Activated naive CD4-positive, alpha-beta T cell treated with anti-CD3 and anti-CD28 coated beads for 36 hours (primary cell): ENCODE measurements at regions of chr1 and their contacts with region 1.

Region 1: DNA sequence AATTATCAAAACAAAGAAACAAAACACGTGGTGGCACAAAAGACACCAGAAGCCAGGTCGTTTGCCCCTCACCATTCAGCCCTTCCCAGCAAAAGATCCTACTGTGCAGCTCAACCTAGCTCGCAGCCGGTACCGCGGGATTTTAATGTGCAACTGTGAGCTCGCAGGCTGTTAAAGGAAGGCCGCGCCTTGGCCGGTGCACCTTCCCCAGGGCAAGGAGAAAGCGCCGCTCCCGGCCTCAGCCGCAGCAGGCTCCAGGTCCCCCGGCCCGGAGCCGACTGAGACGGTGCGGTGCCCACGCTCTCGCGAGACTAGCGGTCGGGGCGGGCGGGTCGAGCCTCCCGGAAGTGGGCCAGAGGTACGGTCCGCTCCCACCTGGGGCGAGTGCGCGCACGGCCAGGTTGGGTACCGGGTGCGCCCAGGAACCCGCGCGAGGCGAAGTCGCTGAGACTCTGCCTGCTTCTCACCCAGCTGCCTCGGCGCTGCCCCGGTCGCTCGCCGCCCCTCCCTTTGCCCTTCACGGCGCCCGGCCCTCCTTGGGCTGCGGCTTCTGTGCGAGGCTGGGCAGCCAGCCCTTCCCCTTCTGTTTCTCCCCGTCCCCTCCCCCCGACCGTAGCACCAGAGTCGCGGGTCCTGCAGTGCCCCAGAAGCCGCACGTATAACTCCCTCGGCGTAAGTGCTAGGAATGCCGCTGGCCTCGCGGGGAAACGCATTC is at the start of gene AGL:
- DNase-seq: peak; percentile 89
- H3K4me3 Mint-ChIP-seq: peak within 1 kb of the TSS; percentile 98
- H3K27ac Mint-ChIP-seq: peak within 1 kb of the TSS; percentile 91
- H3K4me1 Mint-ChIP-seq: peaks cover 23% of the 10 kb centered on the region
- H3K27me3 Mint-ChIP-seq: no peaks in the 10 kb centered on the region
- total RNA-seq, gene AGL: 15.6 to 16.8 TPM

Region 2: DNA sequence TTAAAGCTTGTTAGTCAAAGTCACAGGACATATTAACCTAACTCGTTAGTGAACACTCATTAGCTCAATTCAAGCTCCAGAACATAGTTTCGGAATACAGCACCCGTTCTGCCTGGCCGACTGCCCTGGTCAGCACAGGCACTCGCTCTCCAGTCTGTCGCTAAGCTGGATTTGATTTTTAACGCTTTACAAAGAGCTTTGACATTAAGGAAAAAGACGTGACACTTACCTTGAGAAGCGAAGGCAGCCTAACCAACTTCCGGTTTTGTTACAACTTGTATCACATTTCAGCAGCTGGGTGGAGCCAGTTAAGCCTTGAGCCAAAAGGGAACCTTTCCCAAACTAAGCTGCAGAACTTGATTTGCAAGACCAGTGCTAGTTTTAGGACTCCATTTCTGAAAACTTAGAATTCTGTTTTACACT is 83.5 kb before region 1 on chr1 and contains the start of gene FRRS1:
- CTCF ChIA-PET with region 1: no interaction called
- intact Hi-C with region 1: loop called (anchors 1 kb)
- DNase-seq: peak; percentile 65
- H3K4me3 Mint-ChIP-seq: peak within 1 kb of the TSS; percentile 85
- H3K27ac Mint-ChIP-seq: no peak within 1 kb of the TSS
- H3K4me1 Mint-ChIP-seq: peaks cover 4% of the 10 kb centered on the region
- H3K27me3 Mint-ChIP-seq: peaks cover 5% of the 10 kb centered on the region
- total RNA-seq, gene FRRS1: 0.32 to 0.52 TPM

Region 3: GRCh38 chr1:99820546-99820945 is 29.4 kb before region 1 on chr1:
- CTCF ChIA-PET with region 1: no interaction called
- intact Hi-C with region 1: loop called (anchors 1 kb)
- DNase-seq: peak; percentile 54
- H3K4me3 Mint-ChIP-seq: no peak overlapping the region
- H3K27ac Mint-ChIP-seq: no peak overlapping the region
- H3K4me1 Mint-ChIP-seq: peaks cover 11% of the 10 kb centered on the region
- H3K27me3 Mint-ChIP-seq: no peaks in the 10 kb centered on the region

Region 4: DNA sequence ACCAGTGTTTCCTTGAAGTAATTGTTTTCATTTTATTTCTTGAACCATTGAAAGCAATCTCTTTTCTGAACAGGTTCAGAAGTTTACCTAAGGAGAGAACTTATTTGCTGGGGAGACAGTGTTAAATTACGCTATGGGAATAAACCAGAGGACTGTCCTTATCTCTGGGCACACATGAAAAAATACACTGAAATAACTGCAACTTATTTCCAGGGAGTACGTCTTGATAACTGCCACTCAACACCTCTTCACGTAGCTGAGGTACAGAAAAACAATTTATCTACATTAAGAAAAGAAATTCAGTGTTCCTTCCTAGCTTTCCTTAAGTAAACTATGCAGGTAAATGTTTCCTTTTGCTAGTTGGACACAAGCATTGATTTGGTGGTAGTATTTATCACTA is 27.7 kb after region 1 on chr1:
- CTCF ChIA-PET with region 1: no interaction called
- intact Hi-C with region 1: no loop called
- DNase-seq: no peak
- H3K4me3 Mint-ChIP-seq: no peak overlapping the region
- H3K27ac Mint-ChIP-seq: no peak overlapping the region
- H3K4me1 Mint-ChIP-seq: no peaks in the 10 kb centered on the region
- H3K27me3 Mint-ChIP-seq: no peaks in the 10 kb centered on the region

Region 5: GRCh38 chr1:99969729-99970621 is 120.1 kb after region 1 on chr1 and contains the start of gene SLC35A3:
- CTCF ChIA-PET with region 1: no interaction called
- intact Hi-C with region 1: loop called (anchors 1 kb)
- DNase-seq: peak; percentile 85
- H3K4me3 Mint-ChIP-seq: peak within 1 kb of the TSS; percentile 96
- H3K27ac Mint-ChIP-seq: peak within 1 kb of the TSS; percentile 85
- H3K4me1 Mint-ChIP-seq: peaks cover 22% of the 10 kb centered on the region
- H3K27me3 Mint-ChIP-seq: no peaks in the 10 kb centered on the region
- total RNA-seq, gene SLC35A3: 13.8 to 15.5 TPM

Region 6: DNA sequence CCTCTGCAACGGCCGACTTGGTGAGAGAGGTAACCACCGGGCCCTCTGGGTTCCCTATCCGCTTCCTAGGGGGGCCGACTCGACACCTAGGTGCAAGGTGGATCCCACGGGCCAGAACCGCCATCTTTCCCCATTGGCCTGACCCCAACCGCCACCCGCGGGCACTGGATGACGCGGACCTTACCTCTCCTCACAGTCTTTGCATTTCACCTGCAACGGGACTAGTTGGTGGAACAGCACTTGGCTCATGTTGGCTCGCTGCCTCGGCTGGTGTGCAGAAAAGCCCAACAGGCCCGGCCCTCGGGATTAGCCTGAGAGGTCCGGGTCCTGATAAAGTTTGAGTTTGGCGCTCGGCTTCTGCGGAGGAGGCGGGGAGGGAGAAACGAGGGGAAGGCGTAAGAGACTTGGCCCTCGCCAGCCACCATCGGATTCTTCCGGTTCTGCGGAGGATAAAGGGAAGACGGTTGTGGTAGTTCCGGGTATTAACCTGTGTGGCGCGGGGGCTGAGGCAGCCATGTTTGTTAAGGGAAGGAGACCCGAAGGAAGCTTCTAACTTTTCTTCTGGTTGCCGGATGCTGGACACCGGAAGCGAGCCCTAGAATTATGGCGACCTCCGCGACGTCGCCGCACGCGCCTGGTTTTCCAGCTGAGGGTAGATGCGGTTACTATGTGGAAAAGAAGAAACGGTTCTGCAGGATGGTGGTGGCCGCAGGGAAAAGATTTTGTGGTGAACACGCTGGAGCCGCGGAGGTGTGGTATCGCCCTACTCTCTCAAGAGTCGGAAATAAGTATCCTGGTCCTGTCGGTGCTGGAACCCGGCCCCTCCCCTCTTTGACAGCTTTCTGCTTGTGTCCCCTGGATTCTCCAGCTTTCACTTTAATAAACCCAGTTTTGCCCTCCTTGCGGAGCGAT is 282.9 kb after region 1 on chr1 and contains the starts of genes SASS6 and TRMT13:
- CTCF ChIA-PET with region 1: no interaction called
- intact Hi-C with region 1: loop called (anchors 1 kb)
- DNase-seq: peak; percentile 97
- H3K4me3 Mint-ChIP-seq: peak within 1 kb of the TSS; percentile 91
- H3K27ac Mint-ChIP-seq: peak within 1 kb of the TSS; percentile 87
- H3K4me1 Mint-ChIP-seq: peaks cover 37% of the 10 kb centered on the region
- H3K27me3 Mint-ChIP-seq: no peaks in the 10 kb centered on the region
- total RNA-seq, gene SASS6: 8.2 TPM
- total RNA-seq, gene TRMT13: 12.9 to 16.6 TPM

Region 7: DNA sequence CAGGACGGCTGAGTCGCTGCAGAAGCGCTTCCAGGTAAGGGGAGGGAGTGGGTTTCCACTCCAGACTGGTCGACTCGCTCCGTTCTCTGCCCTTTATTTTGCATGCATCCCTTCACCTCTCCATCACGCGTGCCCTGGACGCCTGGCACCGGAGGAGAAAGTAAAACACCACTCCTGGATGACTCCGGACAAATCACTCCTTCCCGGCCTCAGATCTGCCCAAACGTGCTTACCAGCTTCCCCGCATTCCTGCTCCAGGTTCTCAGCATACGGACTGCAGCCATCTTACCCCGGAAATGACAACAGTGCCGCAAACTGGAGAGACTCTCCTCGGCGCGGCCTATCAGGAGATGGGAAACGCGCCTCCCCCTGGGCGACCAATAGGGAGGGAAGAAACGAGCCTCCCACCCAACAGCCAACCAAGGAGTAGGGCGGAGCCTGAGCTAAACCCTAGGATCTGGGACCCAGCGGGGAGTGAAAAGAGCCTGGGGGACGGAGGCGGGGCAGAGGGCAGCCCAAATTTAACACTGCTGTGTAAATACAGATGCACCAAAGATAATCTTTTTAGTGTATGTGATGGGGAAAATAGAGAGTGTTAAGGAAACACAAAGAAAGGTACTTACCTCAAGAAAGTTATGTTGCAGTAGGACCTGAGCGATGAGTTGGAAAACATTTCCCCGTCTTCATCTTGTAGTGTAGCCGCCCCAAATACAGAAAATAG is 399.8 kb after region 1 on chr1 and contains the start of gene DBT:
- CTCF ChIA-PET with region 1: no interaction called
- intact Hi-C with region 1: loop called (anchors 2 kb)
- DNase-seq: peak; percentile 97
- H3K4me3 Mint-ChIP-seq: no peak within 1 kb of the TSS
- H3K27ac Mint-ChIP-seq: no peak within 1 kb of the TSS
- H3K4me1 Mint-ChIP-seq: peaks cover 18% of the 10 kb centered on the region
- H3K27me3 Mint-ChIP-seq: no peaks in the 10 kb centered on the region
- total RNA-seq, gene DBT: 12.3 to 12.5 TPM

Region 8: GRCh38 chr1:100543640-100544039 is 693.7 kb after region 1 on chr1:
- CTCF ChIA-PET with region 1: no interaction called
- intact Hi-C with region 1: loop called (anchors 5 kb)
- DNase-seq: peak; percentile 75
- H3K4me3 Mint-ChIP-seq: no peak overlapping the region
- H3K27ac Mint-ChIP-seq: no peak overlapping the region
- H3K4me1 Mint-ChIP-seq: peaks cover 2% of the 10 kb centered on the region
- H3K27me3 Mint-ChIP-seq: peaks cover 23% of the 10 kb centered on the region